ENCODE measurements at regions of chr4 and their contacts with region 1.

Region 1: GRCh38 chr4:54322818-54323417 is 93.8 kb downstream of the PDGFRA start:
- DNase-seq: peak; percentile 64
- ATAC-seq: peak; percentile 80 to 81
- H3K4me3 ChIP-seq: no peak overlapping the region
- H3K27ac ChIP-seq: no peak overlapping the region
- H3K4me1 ChIP-seq: no peaks in the 10 kb centered on the region
- H3K27me3 ChIP-seq: no peaks in the 10 kb centered on the region
- CTCF ChIP-seq: peak; percentile 81

Region 2: GRCh38 chr4:54440394-54441136 is 117.6 kb after region 1 on chr4:
- intact Hi-C with region 1: loop called (anchors 5 kb)
- DNase-seq: no peak
- ATAC-seq: peak in 1 of 2 donors; percentile 72
- H3K4me3 ChIP-seq: peak overlapping the region; percentile 20
- H3K27ac ChIP-seq: peak overlapping the region; percentile 42
- H3K4me1 ChIP-seq: peaks cover 14% of the 10 kb centered on the region
- H3K27me3 ChIP-seq: no peaks in the 10 kb centered on the region
- CTCF ChIP-seq: peak; percentile 63

Measured in lower lobe of right lung (tissue), 2 donors.